Caco-2 (cell line): ENCODE measurements at regions of chr3 and their contacts with region 1.

Region 1: DNA sequence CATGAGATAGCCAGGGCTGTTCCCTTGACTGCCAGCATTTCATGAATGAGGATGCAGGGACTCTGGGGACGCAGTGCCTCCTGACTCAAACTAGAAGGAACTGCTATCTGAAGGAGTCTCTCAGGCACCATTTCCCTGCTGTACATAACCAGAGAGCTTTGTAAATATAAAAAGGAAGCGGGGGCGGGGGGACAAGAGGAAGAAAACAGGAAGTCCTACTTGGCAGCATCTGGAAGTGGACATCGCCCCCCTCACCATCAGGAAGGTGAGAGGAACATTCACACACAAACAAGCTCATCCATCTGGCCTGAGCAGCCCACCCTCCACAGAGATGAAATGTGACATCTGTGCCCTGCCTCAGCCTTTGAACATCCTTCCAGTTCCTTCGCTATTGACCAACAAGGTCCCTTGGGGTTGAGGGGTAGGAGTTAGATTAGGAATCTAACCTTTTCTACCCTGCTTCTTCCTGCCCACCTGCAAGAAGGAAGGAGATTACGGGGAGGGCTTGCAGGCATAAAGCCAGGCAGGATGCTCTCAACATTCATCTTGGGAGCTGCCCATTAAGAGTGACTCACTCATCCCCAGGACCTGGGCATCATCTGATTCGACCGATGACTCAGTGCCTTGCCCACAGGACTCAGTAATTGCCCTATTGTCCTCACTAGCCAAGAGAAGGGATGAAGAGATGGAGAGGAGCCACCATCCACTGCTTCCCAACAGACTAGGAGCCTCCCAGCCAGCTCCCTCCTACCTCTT is 31.9 kb downstream of the SH3BP5 start:
- DNase-seq: no peak
- H3K4me3 ChIP-seq: no peak overlapping the region
- H3K4me3 Mint-ChIP-seq: no peak overlapping the region
- H3K27ac Mint-ChIP-seq: no peak overlapping the region
- H3K4me1 ChIP-seq: peaks cover 14% of the 10 kb centered on the region
- H3K4me1 Mint-ChIP-seq: peaks cover 12% of the 10 kb centered on the region
- H3K27me3 ChIP-seq: no peaks in the 10 kb centered on the region
- H3K27me3 Mint-ChIP-seq: no peaks in the 10 kb centered on the region
- CTCF ChIP-seq: no peak

Region 2: DNA sequence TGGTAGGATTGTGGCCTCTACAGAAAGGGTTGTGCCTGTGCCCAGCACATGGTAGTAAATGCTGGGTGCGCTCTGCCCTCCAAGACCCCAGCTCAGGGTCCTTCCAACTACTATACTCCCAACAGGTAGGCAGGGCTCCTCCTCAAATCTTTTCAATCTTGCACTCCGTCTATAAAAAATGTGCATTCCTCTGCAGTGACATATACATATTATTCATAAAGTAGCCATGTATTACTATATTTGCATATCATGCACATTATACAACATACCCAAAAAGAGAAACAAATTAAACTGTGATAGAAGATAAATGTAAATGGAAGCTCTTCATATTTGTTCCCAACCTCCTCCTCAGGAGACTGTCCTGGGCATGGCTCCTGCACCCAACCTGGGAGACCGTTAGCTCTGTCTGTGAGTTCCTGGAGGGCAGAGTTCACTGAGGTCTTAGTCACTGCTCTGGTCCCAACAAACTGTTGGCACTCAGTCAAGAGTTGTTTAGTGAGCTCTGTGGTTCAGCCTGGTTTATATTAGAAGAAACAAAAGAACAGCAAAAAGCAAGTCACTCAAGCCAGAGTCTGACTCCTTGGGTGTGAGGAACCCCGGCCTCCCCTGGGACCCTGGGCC is 712.7 kb before region 1 on chr3:
- CTCF ChIA-PET with region 1: no interaction called
- POLR2A ChIA-PET with region 1: no interaction called
- intact Hi-C with region 1: no loop called
- DNase-seq: no peak
- H3K4me3 ChIP-seq: no peak overlapping the region
- H3K4me3 Mint-ChIP-seq: no peak overlapping the region
- H3K27ac Mint-ChIP-seq: no peak overlapping the region
- H3K4me1 ChIP-seq: peaks cover 20% of the 10 kb centered on the region
- H3K4me1 Mint-ChIP-seq: peaks cover 8% of the 10 kb centered on the region
- H3K27me3 ChIP-seq: no peaks in the 10 kb centered on the region
- H3K27me3 Mint-ChIP-seq: no peaks in the 10 kb centered on the region
- CTCF ChIP-seq: no peak

Region 3: GRCh38 chr3:14947886-14948555 is 352.5 kb before region 1 on chr3:
- CTCF ChIA-PET with region 1: no interaction called
- POLR2A ChIA-PET with region 1: no interaction called
- intact Hi-C with region 1: no loop called
- DNase-seq: peak; percentile 96 to 97
- H3K4me3 ChIP-seq: peak overlapping the region; percentile 80
- H3K4me3 Mint-ChIP-seq: peak overlapping the region; percentile 97
- H3K27ac Mint-ChIP-seq: peak overlapping the region; percentile 100
- H3K4me1 ChIP-seq: no peaks in the 10 kb centered on the region
- H3K4me1 Mint-ChIP-seq: peaks cover 8% of the 10 kb centered on the region
- H3K27me3 ChIP-seq: no peaks in the 10 kb centered on the region
- H3K27me3 Mint-ChIP-seq: no peaks in the 10 kb centered on the region
- CTCF ChIP-seq: no peak

Region 4: DNA sequence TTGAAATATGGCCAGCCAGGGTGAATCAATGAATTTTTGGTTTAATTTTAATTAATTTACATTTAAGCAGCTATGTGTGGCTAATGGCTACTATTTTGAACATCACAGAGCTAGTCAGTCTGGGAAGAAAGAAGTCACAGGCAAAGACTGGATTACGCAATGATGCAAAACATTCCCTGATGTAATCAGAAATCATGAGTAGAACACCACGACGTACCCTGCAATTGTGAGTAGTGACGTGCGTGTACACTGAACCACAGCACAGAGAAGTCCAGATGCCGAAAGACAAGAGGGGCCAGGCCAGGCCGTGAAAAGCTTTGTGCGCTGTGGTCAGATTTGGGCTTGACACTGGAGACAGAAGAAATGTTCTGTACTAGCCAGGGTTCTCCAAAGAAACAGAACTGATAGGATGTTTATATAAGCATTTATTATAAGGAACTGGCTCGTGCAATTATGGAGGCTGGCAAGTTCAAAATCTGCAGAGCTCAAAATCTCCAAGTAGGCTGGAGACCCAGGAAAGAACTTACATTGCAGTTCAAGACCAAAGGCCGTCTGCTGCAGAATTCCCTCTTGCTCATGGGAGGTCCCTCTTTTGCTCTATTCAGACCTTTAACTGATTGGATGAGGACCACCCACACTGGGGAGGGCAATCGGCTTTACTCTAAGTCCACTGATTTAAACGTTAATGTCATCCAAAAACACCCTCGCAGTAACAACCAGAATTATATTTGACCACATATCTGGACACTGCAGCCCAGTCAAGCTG is 12.8 kb before region 1 on chr3:
- CTCF ChIA-PET with region 1: no interaction called
- POLR2A ChIA-PET with region 1: no interaction called
- intact Hi-C with region 1: loop called (anchors 2 kb)
- DNase-seq: no peak
- H3K4me3 ChIP-seq: no peak overlapping the region
- H3K4me3 Mint-ChIP-seq: no peak overlapping the region
- H3K27ac Mint-ChIP-seq: no peak overlapping the region
- H3K4me1 ChIP-seq: no peaks in the 10 kb centered on the region
- H3K4me1 Mint-ChIP-seq: no peaks in the 10 kb centered on the region
- H3K27me3 ChIP-seq: no peaks in the 10 kb centered on the region
- H3K27me3 Mint-ChIP-seq: no peaks in the 10 kb centered on the region
- CTCF ChIP-seq: no peak

Region 5: GRCh38 chr3:15325242-15325641 is 24.7 kb after region 1 on chr3:
- CTCF ChIA-PET with region 1: no interaction called
- POLR2A ChIA-PET with region 1: no interaction called
- intact Hi-C with region 1: loop called (anchors 1 kb)
- DNase-seq: peak; percentile 69 to 76
- H3K4me3 ChIP-seq: no peak overlapping the region
- H3K4me3 Mint-ChIP-seq: peak overlapping the region; percentile 21
- H3K27ac Mint-ChIP-seq: peak overlapping the region; percentile 79
- H3K4me1 ChIP-seq: peaks cover 35% of the 10 kb centered on the region
- H3K4me1 Mint-ChIP-seq: peaks cover 23% of the 10 kb centered on the region
- H3K27me3 ChIP-seq: no peaks in the 10 kb centered on the region
- H3K27me3 Mint-ChIP-seq: no peaks in the 10 kb centered on the region
- CTCF ChIP-seq: no peak